ENCODE measurements at regions of chr6 and their contacts with region 1.

Region 1: GRCh38 chr6:148578245-148578732 is 168.5 kb upstream of the UST start:
- DNase-seq: peak; percentile 74 to 86
- H3K4me3 ChIP-seq: no peak overlapping the region
- H3K27ac ChIP-seq: no peak overlapping the region
- H3K4me1 ChIP-seq: peaks cover 0 to 6% (median 1%) of the 10 kb centered on the region in 4 experiments; a peak in 5 of 7 replicates
- H3K27me3 ChIP-seq: no peaks in the 10 kb centered on the region
- CTCF ChIP-seq: peak; percentile 92 to 100 (median 98)
- EP300 ChIP-seq: no peak
- POLR2A ChIP-seq: no peak
- RAD21 ChIP-seq: peak; percentile 100

Region 2: GRCh38 chr6:148382861-148383260 is 195.4 kb before region 1 on chr6:
- CTCF ChIA-PET with region 1: no interaction called
- POLR2A ChIA-PET with region 1: no interaction called
- DNase-seq: no peak
- H3K4me3 ChIP-seq: no peak overlapping the region
- H3K27ac ChIP-seq: no peak overlapping the region
- H3K4me1 ChIP-seq: peaks cover 0 to 7% (median 2%) of the 10 kb centered on the region in 4 experiments; a peak in 4 of 7 replicates
- H3K27me3 ChIP-seq: no peaks in the 10 kb centered on the region
- CTCF ChIP-seq: no peak
- EP300 ChIP-seq: no peak
- POLR2A ChIP-seq: no peak
- RAD21 ChIP-seq: no peak

Region 3: GRCh38 chr6:148548065-148548748 is 30.1 kb before region 1 on chr6:
- CTCF ChIA-PET with region 1: no interaction called
- POLR2A ChIA-PET with region 1: no interaction called
- DNase-seq: no peak
- H3K4me3 ChIP-seq: no peak overlapping the region
- H3K27ac ChIP-seq: no peak overlapping the region
- H3K4me1 ChIP-seq: peaks cover 0 to 3% (median 0%) of the 10 kb centered on the region in 4 experiments; a peak in 1 of 7 replicates
- H3K27me3 ChIP-seq: no peaks in the 10 kb centered on the region
- CTCF ChIP-seq: no peak
- EP300 ChIP-seq: no peak
- POLR2A ChIP-seq: no peak
- RAD21 ChIP-seq: no peak

Region 4: DNA sequence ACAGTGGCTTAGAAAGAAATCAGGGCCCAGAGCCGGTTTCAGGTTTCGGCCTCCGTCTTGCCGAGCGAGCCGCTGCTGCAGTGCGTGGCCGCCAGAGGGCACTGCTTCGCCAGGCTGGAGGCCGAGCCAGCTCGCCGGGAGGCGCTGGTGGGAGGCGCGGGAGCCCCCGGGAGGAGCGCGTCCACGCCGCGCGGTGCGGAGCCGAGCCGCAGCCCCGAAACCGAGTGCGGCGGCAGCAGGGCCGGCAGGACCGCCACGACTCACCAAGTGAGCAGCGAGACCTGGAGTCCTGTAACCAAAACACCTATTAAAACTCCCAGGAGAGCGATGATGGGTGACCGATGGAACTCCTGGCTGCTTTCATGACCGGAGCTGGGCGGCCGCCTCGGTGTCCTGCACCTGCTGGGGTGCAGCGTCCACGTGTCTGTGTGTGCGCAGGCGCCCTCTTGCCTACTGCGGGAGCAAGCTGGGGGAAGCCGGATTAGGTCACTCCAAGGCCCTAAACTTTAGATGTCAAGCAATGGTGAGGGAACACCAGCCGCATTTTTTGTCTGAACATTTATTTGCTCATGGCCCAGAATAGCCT is 18.3 kb before region 1 on chr6:
- CTCF ChIA-PET with region 1: interaction called, 26 read pairs
- POLR2A ChIA-PET with region 1: no interaction called
- DNase-seq: peak; percentile 21 to 94
- H3K4me3 ChIP-seq: peak overlapping the region; percentile 18 to 60 (median 43); a peak in 7 of 8 replicates
- H3K27ac ChIP-seq: no peak overlapping the region
- H3K4me1 ChIP-seq: no peaks in the 10 kb centered on the region
- H3K27me3 ChIP-seq: peaks cover 0 to 10% (median 6%) of the 10 kb centered on the region in 4 experiments; a peak in 5 of 7 replicates
- CTCF ChIP-seq: peak; percentile 90 to 97 (median 97)
- EP300 ChIP-seq: 0 out of 3 replicates have a peak, but pooled peaks of 1 of the 2 experiments have one; percentile 58
- POLR2A ChIP-seq: 0 out of 3 replicates have a peak, but pooled peaks of 1 of the 2 experiments have one; percentile 44
- RAD21 ChIP-seq: peak; percentile 95 to 97

Region 5: GRCh38 chr6:148593130-148593812 is 15.0 kb after region 1 on chr6:
- CTCF ChIA-PET with region 1: interaction called, 17 read pairs
- POLR2A ChIA-PET with region 1: interaction called, 3 read pairs
- DNase-seq: no peak
- H3K4me3 ChIP-seq: no peak overlapping the region
- H3K27ac ChIP-seq: no peak overlapping the region
- H3K4me1 ChIP-seq: peaks cover 0 to 4% (median under 1%) of the 10 kb centered on the region in 4 experiments; a peak in 3 of 7 replicates
- H3K27me3 ChIP-seq: no peaks in the 10 kb centered on the region
- CTCF ChIP-seq: no peak
- EP300 ChIP-seq: no peak
- POLR2A ChIP-seq: no peak
- RAD21 ChIP-seq: no peak

Region 6: GRCh38 chr6:148608199-148608951 is 30.1 kb after region 1 on chr6:
- CTCF ChIA-PET with region 1: interaction called, 21 read pairs
- POLR2A ChIA-PET with region 1: no interaction called
- DNase-seq: no peak
- H3K4me3 ChIP-seq: no peak overlapping the region
- H3K27ac ChIP-seq: no peak overlapping the region
- H3K4me1 ChIP-seq: no peaks in the 10 kb centered on the region
- H3K27me3 ChIP-seq: no peaks in the 10 kb centered on the region
- CTCF ChIP-seq: peak in 2 of 3 experiments; percentile 55 to 62; a peak in 3 of 4 replicates
- EP300 ChIP-seq: no peak
- POLR2A ChIP-seq: no peak
- RAD21 ChIP-seq: peak; percentile 54 to 73

Region 7: DNA sequence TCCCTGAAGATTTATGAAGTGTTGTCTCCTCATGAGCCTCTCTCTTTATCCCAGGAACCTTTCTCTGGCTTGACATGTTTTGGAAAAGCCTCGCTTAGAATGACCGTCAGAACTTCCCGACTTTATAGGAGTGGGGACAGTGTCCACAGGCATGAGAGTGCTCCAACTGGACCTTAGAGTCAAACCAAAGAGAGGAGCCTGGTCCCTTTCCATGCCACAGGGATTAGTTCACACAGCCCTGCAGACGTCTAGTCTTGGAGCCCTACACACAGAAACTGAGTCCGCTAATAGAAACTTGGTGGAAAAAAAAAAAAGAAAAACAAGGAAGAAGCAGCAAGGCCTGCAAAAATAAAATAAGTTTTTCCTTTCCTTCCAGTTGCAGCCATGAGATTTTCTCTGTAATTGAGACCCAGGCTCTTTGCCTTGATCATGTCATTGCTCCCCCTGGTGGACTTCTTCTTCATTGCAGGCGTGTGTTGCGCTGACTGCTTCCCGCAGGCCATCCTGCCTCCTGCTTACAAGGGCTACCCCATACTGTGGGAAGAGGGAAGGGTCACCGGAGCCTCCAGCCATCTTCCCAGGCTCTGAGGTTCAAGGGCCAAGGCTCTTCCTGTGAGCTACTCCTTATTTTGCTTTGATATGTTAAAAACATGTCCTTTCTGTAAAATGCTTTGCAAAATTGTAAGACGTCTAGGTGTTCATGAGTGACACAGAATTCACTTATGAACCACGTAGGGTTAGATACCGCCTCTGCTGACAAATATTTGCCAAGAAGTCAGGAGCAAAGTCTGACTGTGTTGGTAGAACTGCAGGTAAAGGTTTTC is 369.5 kb after region 1 on chr6:
- CTCF ChIA-PET with region 1: interaction called, 18 read pairs
- POLR2A ChIA-PET with region 1: no interaction called
- DNase-seq: peak; percentile 80 to 94
- H3K4me3 ChIP-seq: no peak overlapping the region
- H3K27ac ChIP-seq: no peak overlapping the region
- H3K4me1 ChIP-seq: peaks cover 0 to 12% (median 5%) of the 10 kb centered on the region in 4 experiments; a peak in 4 of 7 replicates
- H3K27me3 ChIP-seq: no peaks in the 10 kb centered on the region
- CTCF ChIP-seq: peak; percentile 74 to 91 (median 81)
- EP300 ChIP-seq: no peak
- POLR2A ChIP-seq: no peak
- RAD21 ChIP-seq: peak; percentile 79 to 86

Region 8: GRCh38 chr6:149107520-149107919 is 529.2 kb after region 1 on chr6:
- CTCF ChIA-PET with region 1: no interaction called
- POLR2A ChIA-PET with region 1: no interaction called
- DNase-seq: no peak
- H3K4me3 ChIP-seq: no peak overlapping the region
- H3K27ac ChIP-seq: no peak overlapping the region
- H3K4me1 ChIP-seq: no peaks in the 10 kb centered on the region
- H3K27me3 ChIP-seq: no peaks in the 10 kb centered on the region
- CTCF ChIP-seq: no peak
- EP300 ChIP-seq: no peak
- POLR2A ChIP-seq: no peak
- RAD21 ChIP-seq: no peak

Measured in H1 (cell line).